CD4-positive, alpha-beta T cell (primary cell): ENCODE measurements at regions of chr1 and their contacts with region 1.

Region 1: DNA sequence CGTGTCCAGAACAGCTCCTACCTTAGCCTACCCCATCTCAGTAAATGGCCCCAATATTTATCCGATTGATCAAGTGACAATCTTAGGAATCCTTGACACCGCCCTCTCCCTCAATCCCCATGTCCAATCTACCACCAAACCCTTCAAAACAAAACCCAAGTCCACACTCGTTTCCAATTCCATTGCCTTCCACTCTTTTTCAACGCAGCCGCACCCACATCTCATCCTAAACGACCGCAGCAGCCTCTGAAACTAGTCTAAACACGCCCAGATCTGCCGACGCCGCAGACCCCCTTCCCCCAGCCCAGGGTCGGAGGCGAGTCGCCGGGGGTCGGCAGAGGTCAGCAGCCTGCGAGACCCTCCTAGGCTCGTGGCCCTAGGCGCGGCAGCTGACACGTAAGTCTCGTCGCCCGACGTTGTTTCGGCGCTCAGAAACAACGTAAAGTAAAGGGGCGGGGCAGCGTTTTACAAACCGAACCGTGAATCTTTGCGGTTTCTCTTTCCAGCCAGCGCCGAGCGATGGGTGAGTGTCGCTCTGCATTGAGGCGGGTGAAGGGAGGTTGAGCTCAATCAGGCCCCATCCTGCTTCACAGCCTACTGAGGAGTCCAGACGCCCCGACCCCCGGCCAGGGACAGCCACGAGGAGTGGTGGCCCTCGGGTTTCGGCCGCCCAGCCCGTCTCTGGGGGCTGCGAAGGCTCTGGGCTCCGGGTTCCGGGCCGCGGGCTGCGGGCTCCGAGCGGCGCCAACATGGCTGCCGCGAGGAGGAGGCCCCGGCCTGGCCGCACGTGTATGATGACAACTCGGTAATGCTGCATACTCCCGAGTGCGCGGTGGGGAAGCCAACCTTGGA is at the start of gene RPS8:
- DNase-seq: peak; percentile 82 to 95 (median 86)
- ATAC-seq: peak; percentile 83
- H3K4me3 ChIP-seq: peak within 1 kb of the TSS; percentile 77
- H3K4me3 Mint-ChIP-seq: peak within 1 kb of the TSS; percentile 90
- H3K27ac ChIP-seq: peak within 1 kb of the TSS; percentile 91
- H3K27ac Mint-ChIP-seq: peak within 1 kb of the TSS; percentile 89
- H3K4me1 ChIP-seq: peaks cover 33% of the 10 kb centered on the region
- H3K4me1 Mint-ChIP-seq: peaks cover 54% of the 10 kb centered on the region
- H3K27me3 ChIP-seq: no peaks in the 10 kb centered on the region
- H3K27me3 Mint-ChIP-seq: no peaks in the 10 kb centered on the region
- CTCF ChIP-seq: no peak
- total RNA-seq, gene RPS8: 3,394 to 3,436 TPM

Region 2: DNA sequence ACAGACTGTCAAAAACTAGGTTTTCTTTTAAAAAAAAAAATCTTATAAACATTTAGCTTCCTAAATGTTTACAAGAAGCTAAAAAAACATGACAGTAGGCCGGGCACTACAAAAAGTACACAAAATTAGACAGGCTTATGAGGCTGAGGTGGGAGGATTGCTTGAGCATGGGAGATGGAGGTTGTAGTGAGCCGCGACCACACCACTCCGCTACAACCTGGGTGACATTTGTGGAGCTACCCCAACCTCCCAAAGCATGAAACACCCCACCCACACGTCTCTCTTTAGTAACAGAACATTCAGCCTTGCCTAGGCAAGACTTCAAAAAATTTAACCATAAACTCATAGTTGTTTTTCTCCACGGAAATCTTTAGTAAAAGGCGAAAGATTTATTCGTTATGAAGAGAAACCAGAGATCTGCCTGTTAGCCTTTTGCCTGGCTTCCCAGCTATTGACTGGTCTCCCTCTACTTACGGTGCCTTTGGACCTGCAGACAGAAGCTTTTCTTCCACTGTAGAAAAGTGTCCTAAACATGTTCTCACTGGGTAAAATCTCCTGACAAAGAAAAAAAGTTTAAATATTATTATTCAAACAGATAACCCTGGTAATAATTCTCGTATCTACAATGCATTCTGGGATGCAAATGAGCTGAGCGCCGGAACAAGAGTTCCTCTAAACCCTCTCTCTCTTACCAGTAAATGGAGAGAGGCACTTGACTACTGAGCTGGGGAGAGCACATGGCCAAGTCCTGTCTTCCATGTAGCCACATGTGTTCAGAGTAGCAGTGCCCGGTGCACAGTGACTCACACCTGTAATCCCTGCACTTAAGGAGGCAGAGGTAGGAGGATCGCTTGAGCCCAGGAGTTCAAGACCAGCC is 53.6 kb before region 1 on chr1:
- CTCF ChIA-PET with region 1: no interaction called
- POLR2A ChIA-PET with region 1: interaction called, 47 read pairs
- intact Hi-C with region 1: no loop called
- DNase-seq: peak; percentile 16 to 93 (median 48)
- ATAC-seq: peak; percentile 75
- H3K4me3 ChIP-seq: peak overlapping the region; percentile 6
- H3K4me3 Mint-ChIP-seq: peak overlapping the region; percentile 84
- H3K27ac ChIP-seq: peak overlapping the region; percentile 30 to 76
- H3K27ac Mint-ChIP-seq: peak overlapping the region; percentile 90
- H3K4me1 ChIP-seq: peaks cover 77% of the 10 kb centered on the region
- H3K4me1 Mint-ChIP-seq: peaks cover 68% of the 10 kb centered on the region
- H3K27me3 ChIP-seq: no peaks in the 10 kb centered on the region
- H3K27me3 Mint-ChIP-seq: no peaks in the 10 kb centered on the region
- CTCF ChIP-seq: no peak

Region 3: DNA sequence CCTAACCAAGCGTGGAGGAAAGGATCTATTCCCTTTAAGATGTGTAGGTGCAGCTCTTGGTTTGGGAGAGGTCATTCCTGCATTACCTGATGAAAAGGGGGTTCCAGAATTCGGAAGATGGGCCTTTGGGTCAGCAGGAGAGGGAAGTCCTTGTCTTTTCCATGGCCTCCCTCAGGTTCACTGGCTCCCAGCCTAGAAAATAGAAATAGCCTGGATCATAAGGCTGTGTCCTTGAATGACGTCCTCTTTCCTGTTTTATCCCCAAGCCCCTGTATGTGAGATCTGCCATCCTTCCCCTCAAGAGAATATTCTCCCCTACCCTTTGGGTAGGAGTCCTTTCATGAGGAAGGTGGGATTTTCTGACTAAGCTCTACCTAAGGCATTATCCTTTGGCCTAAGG is 14.4 kb before region 1 on chr1:
- CTCF ChIA-PET with region 1: no interaction called
- POLR2A ChIA-PET with region 1: interaction called, 10 read pairs
- intact Hi-C with region 1: no loop called
- DNase-seq: no peak
- ATAC-seq: no peak
- H3K4me3 ChIP-seq: no peak overlapping the region
- H3K4me3 Mint-ChIP-seq: no peak overlapping the region
- H3K27ac ChIP-seq: no peak overlapping the region
- H3K27ac Mint-ChIP-seq: no peak overlapping the region
- H3K4me1 ChIP-seq: peaks cover 5% of the 10 kb centered on the region
- H3K4me1 Mint-ChIP-seq: no peaks in the 10 kb centered on the region
- H3K27me3 ChIP-seq: no peaks in the 10 kb centered on the region
- H3K27me3 Mint-ChIP-seq: no peaks in the 10 kb centered on the region
- CTCF ChIP-seq: no peak

Region 4: DNA sequence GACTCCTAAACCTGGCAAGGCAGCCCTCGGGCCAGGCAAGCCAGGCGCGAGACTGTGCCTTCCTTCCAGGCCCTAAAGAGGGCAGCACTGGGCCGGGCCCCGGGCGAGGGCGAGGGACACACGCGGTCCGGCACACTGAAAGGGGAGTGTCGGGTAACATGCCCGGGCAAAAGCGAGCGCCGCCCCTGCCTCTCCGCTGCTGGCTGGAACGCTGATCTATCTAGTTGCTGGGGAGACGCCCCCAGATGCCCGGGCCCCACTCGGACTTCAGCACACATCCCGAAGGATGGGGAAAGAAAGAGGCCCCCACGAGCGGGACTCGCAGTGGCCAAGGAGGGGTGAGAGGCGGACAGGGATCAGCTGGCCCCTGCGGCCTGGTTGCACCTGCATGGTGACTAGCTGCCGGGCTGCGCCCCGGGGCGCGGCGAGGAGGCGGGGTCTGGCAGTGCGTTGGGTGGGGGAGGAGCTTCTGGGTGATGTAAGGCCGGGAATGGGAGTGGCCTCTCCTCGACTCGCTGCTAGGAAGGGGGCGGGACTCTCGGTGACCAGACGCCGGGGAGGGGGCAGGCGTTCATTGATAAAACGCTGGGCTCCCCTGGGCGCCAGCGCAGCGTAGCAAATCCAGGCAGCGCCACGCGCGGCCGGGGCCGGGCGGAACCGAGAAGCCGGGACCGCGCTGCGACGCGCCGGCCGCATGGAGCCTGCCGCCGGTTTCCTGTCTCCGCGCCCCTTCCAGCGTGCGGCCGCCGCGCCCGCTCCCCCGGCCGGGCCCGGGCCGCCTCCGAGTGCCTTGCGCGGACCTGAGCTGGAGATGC is 24.7 kb after region 1 on chr1 and contains the start of gene PLK3:
- CTCF ChIA-PET with region 1: interaction called, 14 read pairs
- POLR2A ChIA-PET with region 1: interaction called, 48 read pairs
- intact Hi-C with region 1: no loop called
- DNase-seq: peak; percentile 97 to 100 (median 98)
- ATAC-seq: peak; percentile 77
- H3K4me3 ChIP-seq: peak within 1 kb of the TSS; percentile 99
- H3K4me3 Mint-ChIP-seq: peak within 1 kb of the TSS; percentile 99
- H3K27ac ChIP-seq: peak within 1 kb of the TSS; percentile 88 to 98
- H3K27ac Mint-ChIP-seq: peak within 1 kb of the TSS; percentile 86
- H3K4me1 ChIP-seq: peaks cover 48% of the 10 kb centered on the region
- H3K4me1 Mint-ChIP-seq: peaks cover 39% of the 10 kb centered on the region
- H3K27me3 ChIP-seq: no peaks in the 10 kb centered on the region
- H3K27me3 Mint-ChIP-seq: no peaks in the 10 kb centered on the region
- CTCF ChIP-seq: peak; percentile 79
- total RNA-seq, gene PLK3: 794 TPM

Region 5: DNA sequence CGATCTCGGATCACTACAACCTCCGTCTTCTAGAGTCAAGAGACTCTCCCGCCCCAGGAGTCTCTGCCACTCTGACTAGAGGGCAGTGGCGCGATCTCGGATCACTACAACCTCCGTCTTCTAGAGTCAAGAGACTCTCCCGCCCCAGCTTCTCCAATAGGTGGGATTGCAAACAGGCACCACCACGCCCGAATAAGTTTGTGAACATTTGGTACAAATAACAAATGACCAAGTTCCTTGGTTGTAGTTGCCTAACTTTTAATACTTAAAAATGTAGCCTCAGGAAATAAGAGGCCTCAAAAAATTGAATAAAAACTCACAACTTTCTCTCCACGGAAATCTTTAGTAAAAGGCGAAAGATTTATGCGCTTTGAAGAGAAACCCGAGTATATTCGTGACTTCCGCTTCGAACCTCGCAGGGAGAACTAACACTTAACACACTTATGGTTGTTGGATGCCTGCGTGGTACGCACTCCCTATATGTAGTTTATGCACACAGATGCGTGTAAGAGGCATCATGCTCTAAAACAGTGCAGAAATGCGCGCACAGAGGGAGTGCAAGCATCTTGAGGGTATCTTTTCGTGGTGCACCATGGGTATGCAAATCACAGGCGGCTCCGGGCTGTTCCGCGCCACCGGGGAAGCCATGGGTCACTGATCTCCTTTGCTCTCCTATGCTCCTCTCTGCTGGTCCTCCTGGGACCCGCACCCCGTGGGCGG is 44.5 kb after region 1 on chr1:
- CTCF ChIA-PET with region 1: no interaction called
- POLR2A ChIA-PET with region 1: interaction called, 49 read pairs
- intact Hi-C with region 1: loop called in 1 of 2 experiments (anchors 5 kb)
- DNase-seq: peak; percentile 71 to 90 (median 79)
- ATAC-seq: peak; percentile 78
- H3K4me3 ChIP-seq: peak overlapping the region; percentile 65
- H3K4me3 Mint-ChIP-seq: peak overlapping the region; percentile 94
- H3K27ac ChIP-seq: peak overlapping the region; percentile 96 to 99
- H3K27ac Mint-ChIP-seq: peak overlapping the region; percentile 100
- H3K4me1 ChIP-seq: peaks cover 31% of the 10 kb centered on the region
- H3K4me1 Mint-ChIP-seq: peaks cover 45% of the 10 kb centered on the region
- H3K27me3 ChIP-seq: no peaks in the 10 kb centered on the region
- H3K27me3 Mint-ChIP-seq: no peaks in the 10 kb centered on the region
- CTCF ChIP-seq: no peak